Vagina (tissue), 2 donors: ENCODE measurements at regions of chr20 and their contacts with region 1.

Region 1: DNA sequence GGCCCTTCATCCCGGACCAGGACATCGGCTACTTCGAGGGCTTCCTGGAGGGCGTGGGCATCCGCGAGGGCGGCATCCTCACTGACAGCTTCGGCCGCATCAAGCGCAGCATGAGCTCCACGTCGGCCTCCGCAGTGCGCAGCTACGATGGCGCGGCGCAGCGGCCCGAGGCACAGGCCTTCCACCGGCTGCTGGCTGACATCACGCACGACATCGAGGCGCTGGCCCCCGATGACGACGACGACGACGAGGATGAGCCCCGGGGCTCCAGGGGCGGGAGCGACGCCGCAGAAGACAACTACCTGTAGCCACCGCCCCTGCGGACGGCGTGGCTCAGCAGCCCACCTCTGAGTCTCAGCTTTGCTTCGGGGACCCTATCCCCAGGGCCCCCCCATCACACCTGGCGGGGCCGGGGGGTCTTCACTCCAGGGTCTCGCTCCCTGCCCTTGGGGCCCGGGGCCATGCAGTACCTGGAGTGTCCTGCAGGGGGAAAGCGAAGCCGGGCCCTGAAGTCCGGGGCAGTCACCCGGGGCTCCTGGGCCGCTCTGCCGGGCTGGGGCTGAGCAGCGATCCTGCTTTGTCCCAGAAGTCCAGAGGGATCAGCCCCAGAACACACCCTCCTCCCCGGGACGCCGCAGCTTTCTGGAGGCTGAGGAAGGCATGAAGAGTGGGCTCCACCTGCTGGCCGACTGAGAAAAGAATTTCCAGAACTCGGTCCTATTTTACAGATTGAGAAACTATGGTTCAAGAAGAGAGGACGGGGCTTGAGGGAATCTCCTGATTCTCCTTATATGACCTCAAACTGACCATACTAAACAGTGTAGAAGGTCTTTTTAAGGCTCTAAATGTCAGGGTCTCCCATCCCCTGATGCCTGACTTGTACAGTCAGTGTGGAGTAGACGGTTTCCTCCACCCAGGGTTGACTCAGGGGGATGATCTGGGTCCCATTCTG is 20.8 kb upstream of the HCK start:
- DNase-seq: no peak
- H3K4me3 ChIP-seq: peak overlapping the region; percentile 2 to 13
- H3K27ac ChIP-seq: no peak overlapping the region
- H3K4me1 ChIP-seq: peaks cover 7% of the 10 kb centered on the region
- H3K27me3 ChIP-seq: peaks cover 4% of the 10 kb centered on the region
- CTCF ChIP-seq: peak; percentile 68 to 80 (median 79)
- POLR2A ChIP-seq: no peak

Region 2: DNA sequence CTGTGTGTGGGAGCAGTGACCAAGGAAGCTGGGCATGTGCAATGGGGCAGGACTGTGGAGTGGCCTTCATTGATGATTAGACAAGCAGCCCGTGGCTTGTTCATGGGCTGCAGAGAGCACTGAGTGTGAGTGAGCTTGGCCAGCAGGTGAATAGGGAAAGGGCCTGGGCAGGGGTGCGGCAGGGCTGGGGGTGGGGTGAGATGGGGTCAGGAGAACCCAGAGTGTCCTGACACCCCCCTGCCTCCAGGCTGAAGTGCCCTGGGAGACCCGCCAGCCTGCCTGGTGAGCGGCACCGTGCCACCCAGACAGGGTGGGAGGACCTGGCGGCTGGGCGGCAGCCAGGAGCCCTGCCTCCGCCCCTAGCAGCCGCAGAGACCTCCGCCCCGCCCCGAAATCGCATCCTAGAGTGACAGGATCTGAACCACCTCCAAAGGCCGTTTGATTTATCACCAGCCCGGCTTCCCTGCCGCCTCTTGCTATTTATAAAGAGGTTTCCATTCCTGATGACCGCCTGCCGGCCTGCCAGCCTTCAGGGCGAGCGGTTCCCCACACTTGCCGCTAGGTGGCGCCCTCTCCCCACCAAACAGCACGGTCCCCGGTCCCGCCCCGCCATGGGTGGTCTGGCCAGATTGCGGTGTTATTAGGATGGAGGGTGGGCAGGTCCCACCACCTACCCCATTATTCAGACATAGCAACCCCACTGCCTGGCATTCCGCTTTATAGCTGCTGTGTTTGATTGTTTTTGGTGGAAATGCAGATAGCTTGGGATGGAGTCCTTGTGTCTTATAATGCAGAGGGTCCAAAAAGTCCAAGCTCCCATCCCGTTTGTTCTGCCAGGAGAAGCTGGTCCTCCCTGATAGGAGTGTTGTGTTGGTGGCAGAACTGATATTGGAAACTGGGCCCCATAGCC is 208.6 kb before region 1 on chr20:
- intact Hi-C with region 1: loop called (anchors 10 kb)
- DNase-seq: no peak
- H3K4me3 ChIP-seq: no peak overlapping the region
- H3K27ac ChIP-seq: no peak overlapping the region
- H3K4me1 ChIP-seq: peaks cover 13% of the 10 kb centered on the region
- H3K27me3 ChIP-seq: no peaks in the 10 kb centered on the region
- CTCF ChIP-seq: peak; percentile 95 to 99 (median 95)
- POLR2A ChIP-seq: no peak

Region 3: GRCh38 chr20:31859998-31860709 is 171.1 kb before region 1 on chr20:
- intact Hi-C with region 1: loop called (anchors 10 kb)
- DNase-seq: no peak
- H3K4me3 ChIP-seq: peak overlapping the region; percentile 54 to 84
- H3K27ac ChIP-seq: no peak overlapping the region
- H3K4me1 ChIP-seq: peaks cover 15% of the 10 kb centered on the region
- H3K27me3 ChIP-seq: no peaks in the 10 kb centered on the region
- CTCF ChIP-seq: no peak
- POLR2A ChIP-seq: no peak